ENCODE measurements at regions of chr20 and their contacts with region 1.

Region 1: GRCh38 chr20:58890518-58891085 is 38.1 kb downstream of the GNAS start:
- DNase-seq: peak; percentile 85 to 88
- ATAC-seq: peak; percentile 49 to 58 (median 52)
- H3K4me3 ChIP-seq: peak overlapping the region; percentile 84
- H3K27ac ChIP-seq: peak overlapping the region; percentile 97
- H3K4me1 ChIP-seq: peaks cover 26% of the 10 kb centered on the region
- H3K27me3 ChIP-seq: no peaks in the 10 kb centered on the region
- CTCF ChIP-seq: no peak

Region 2: DNA sequence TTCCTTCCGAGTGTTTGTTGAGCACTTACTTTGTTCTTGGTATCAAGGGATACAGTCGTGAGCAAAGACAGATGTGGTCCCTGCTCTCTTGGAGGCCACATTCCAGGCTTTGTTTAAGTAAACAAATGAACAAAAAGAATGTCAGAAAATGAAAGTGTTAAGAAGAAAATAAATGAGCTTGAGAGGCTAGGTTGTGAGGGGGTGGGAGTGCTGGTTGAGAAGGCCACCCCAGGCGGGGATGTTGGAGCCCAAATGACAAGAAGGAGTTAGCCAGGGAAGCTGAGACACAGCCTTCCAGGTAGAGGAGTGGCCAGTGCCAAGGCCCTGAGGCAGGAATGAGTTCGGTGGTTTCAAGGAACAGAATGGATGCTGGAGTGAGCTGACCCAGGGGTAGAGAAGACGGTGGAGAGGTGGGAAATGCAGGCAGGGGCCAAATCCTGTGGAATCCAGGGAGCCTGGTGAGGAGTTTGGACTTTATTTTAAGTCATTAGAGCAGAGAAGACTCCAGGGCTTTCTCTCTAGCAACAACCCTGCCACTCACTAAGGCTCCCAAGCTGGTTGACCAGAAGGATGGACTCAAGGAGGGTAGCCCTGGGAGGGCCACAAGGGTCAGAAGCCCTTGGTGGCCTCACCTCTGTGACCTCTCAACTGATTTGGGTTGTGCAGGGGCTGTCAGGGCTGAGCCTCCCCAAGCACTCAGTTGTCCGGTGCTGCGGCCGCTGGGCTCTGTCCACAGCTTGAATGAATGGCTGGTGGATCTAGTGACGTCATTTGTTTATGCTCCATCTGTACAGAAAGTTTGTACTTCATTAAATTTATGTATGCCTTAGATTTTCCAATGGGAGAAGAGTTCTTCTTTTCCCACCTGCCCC is 305.5 kb before region 1 on chr20:
- intact Hi-C with region 1: no loop called
- DNase-seq: no peak
- ATAC-seq: no peak
- H3K4me3 ChIP-seq: no peak overlapping the region
- H3K27ac ChIP-seq: no peak overlapping the region
- H3K4me1 ChIP-seq: no peaks in the 10 kb centered on the region
- H3K27me3 ChIP-seq: peaks cover 0 to 22% (median 9%) of the 10 kb centered on the region in 3 donors
- CTCF ChIP-seq: no peak

Region 3: GRCh38 chr20:58907399-58908137 is 17.0 kb after region 1 on chr20:
- intact Hi-C with region 1: loop called in 1 of 2 experiments (anchors 2 kb)
- DNase-seq: peak; percentile 85 to 93
- ATAC-seq: peak; percentile 94 to 97 (median 96)
- H3K4me3 ChIP-seq: peak overlapping the region; percentile 50
- H3K27ac ChIP-seq: peak overlapping the region; percentile 88
- H3K4me1 ChIP-seq: peaks cover 48% of the 10 kb centered on the region
- H3K27me3 ChIP-seq: no peaks in the 10 kb centered on the region
- CTCF ChIP-seq: no peak

Region 4: GRCh38 chr20:59042796-59043660 is 152.4 kb after region 1 on chr20:
- intact Hi-C with region 1: loop called in 1 of 2 experiments (anchors 5 kb)
- DNase-seq: peak; percentile 93 to 97
- ATAC-seq: peak; percentile 96 to 99 (median 98)
- H3K4me3 ChIP-seq: peak overlapping the region; percentile 80
- H3K27ac ChIP-seq: peak overlapping the region; percentile 79
- H3K4me1 ChIP-seq: peaks cover 25% of the 10 kb centered on the region
- H3K27me3 ChIP-seq: no peaks in the 10 kb centered on the region
- CTCF ChIP-seq: no peak